ENCODE measurements at regions of chr2 and their contacts with region 1.

Region 1: GRCh38 chr2:29108225-29108624 is 7.0 kb upstream of the CLIP4 start:
- DNase-seq: peak; percentile 95
- H3K4me3 Mint-ChIP-seq: peak overlapping the region; percentile 39
- H3K27ac Mint-ChIP-seq: peak overlapping the region; percentile 81
- H3K4me1 Mint-ChIP-seq: peaks cover 28% of the 10 kb centered on the region
- H3K27me3 Mint-ChIP-seq: no peaks in the 10 kb centered on the region
- CTCF ChIP-seq: no peak

Region 2: DNA sequence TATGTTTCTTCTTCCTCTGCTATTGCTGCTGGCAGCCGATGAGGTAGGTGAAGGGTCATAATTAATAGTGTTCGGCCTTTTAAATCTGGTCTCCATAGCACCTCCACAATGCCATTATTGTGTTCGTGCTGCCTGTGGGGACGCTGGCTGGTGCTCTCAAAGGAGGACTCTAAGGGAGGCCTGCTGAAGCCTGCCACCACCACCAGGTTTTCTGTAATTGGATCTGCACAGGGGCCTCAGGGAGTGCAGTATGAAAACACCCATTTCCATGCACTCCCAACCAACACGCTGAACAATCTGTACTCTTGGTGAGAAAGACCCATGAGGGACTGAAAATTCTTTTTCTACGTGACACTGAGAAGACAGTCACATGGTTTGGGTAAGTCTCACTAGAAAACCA is 10.7 kb before region 1 on chr2:
- CTCF ChIA-PET with region 1: no interaction called
- POLR2A ChIA-PET with region 1: interaction called, 13 read pairs
- intact Hi-C with region 1: no loop called
- DNase-seq: no peak
- H3K4me3 Mint-ChIP-seq: no peak overlapping the region
- H3K27ac Mint-ChIP-seq: no peak overlapping the region
- H3K4me1 Mint-ChIP-seq: no peaks in the 10 kb centered on the region
- H3K27me3 Mint-ChIP-seq: no peaks in the 10 kb centered on the region
- CTCF ChIP-seq: no peak

Region 3: DNA sequence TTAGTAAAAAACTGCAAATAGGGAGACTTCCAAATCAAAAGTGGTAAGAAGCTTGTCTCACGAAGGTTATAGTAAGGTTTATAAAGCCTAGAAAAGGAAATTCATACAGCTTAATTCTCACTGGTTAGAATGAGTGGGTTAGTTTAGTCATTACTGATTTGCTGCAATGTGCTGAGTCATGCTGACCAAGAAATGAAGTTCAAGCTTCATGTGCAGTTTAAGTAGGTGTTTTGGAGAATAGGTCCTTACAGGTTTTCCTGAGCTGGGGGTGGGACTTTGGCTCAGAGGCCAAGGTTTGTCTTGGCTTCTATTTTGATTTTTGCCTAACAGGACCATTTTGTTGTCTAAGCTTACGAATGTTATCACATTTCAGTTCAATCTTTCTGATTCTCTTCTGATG is 22.1 kb after region 1 on chr2:
- CTCF ChIA-PET with region 1: interaction called, 6 read pairs
- POLR2A ChIA-PET with region 1: interaction called, 171 read pairs
- intact Hi-C with region 1: no loop called
- DNase-seq: peak; percentile 93
- H3K4me3 Mint-ChIP-seq: peak overlapping the region; percentile 46
- H3K27ac Mint-ChIP-seq: peak overlapping the region; percentile 63
- H3K4me1 Mint-ChIP-seq: peaks cover 25% of the 10 kb centered on the region
- H3K27me3 Mint-ChIP-seq: no peaks in the 10 kb centered on the region
- CTCF ChIP-seq: no peak

Region 4: DNA sequence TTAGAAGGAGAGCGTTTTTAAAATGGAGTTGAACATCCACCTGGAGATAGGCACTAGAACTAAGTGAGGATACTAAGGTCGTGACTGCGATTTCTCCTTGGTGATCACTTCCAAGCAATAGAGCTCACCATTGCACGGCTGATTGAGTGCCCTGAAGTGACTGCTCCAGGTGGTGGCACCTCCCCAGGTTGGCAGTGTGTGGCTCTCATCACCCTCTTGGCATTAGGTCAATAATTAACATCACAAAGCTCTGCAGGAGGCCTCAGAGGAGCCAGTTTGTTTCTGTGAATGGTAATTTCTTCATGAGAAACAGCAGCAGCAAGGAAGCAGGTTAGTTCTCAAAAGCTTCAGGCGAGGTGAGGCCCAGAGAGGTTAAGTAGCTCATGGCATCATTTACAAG is 266.6 kb after region 1 on chr2:
- CTCF ChIA-PET with region 1: no interaction called
- POLR2A ChIA-PET with region 1: no interaction called
- intact Hi-C with region 1: no loop called
- DNase-seq: no peak
- H3K4me3 Mint-ChIP-seq: no peak overlapping the region
- H3K27ac Mint-ChIP-seq: no peak overlapping the region
- H3K4me1 Mint-ChIP-seq: no peaks in the 10 kb centered on the region
- H3K27me3 Mint-ChIP-seq: peaks cover 27% of the 10 kb centered on the region
- CTCF ChIP-seq: no peak

Measured in MCF 10A (cell line).